Caco-2 (cell line): ENCODE measurements at regions of chr10 and their contacts with region 1.

Region 1: DNA sequence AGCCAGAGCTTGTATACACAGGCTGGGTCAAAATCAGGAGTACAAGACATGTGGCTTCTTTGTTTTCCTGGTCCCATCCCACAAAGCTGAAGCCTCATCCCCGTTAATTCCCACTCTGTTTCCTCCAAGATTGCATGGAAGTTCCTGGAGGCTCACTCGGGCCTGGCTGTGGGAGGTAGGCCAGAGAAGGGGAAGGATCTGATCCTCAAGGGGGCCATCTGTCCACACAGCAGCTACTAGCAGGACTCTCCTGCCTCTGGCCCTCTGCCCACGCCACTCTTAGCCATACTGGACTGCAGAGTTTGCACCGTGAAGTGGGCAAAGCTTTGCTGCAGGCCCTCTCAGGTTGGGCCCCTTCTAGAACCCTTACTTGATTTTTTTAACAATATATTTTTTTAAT is 160.6 kb downstream of the FGFR2 start:
- DNase-seq: peak in 1 of 2 experiments; percentile 43
- H3K4me3 ChIP-seq: no peak overlapping the region
- H3K4me3 Mint-ChIP-seq: peak overlapping the region; percentile 27
- H3K27ac Mint-ChIP-seq: peak overlapping the region; percentile 94
- H3K4me1 ChIP-seq: peaks cover 74% of the 10 kb centered on the region
- H3K4me1 Mint-ChIP-seq: peaks cover 45% of the 10 kb centered on the region
- H3K27me3 ChIP-seq: no peaks in the 10 kb centered on the region
- H3K27me3 Mint-ChIP-seq: no peaks in the 10 kb centered on the region
- CTCF ChIP-seq: no peak

Region 2: DNA sequence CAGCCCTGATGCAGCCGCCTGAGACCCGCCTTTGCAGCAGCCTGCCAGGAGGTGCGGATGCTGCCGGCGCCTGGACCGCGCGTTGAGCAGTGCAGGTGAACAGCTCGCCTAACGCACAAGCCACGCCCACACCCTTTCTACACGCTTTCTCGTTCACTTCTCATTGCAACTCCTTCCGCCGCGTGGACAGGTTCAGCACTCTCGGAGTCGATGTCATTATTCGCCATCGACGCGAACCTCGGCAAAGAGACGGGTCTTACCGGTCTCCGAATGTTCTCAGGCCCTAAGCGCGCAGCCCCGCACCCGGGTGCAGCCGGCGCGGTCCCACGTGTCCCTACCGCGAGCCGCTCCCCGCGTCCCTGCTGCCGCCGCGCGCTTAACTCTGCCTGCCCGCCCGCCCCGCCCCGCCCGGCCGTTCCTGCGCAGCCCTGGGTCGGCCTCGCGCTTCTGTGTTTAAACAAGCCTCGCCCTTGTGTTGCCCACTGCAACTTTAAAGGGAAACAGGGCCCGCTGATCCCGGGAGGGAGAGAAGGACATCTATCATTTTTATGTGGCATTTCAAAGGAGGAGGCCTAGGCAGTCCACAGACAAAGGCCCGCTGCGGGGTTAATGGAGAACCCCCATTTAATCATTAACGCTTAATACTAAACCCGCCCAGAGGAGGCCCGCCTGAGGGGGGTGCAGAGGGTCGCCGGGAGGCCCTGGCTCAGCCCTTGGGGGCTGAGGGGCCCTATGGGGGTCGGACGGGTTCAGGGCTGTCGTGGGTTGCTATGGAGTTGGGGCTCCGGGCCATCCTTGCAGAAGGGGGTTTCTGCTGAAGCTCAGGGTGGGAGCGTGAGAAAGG is 457.9 kb before region 1 on chr10:
- CTCF ChIA-PET with region 1: no interaction called
- POLR2A ChIA-PET with region 1: no interaction called
- intact Hi-C with region 1: loop called (anchors 5 kb)
- DNase-seq: peak; percentile 94 to 97
- H3K4me3 ChIP-seq: peak overlapping the region; percentile 83
- H3K4me3 Mint-ChIP-seq: peak overlapping the region; percentile 82
- H3K27ac Mint-ChIP-seq: peak overlapping the region; percentile 93
- H3K4me1 ChIP-seq: peaks cover 60% of the 10 kb centered on the region
- H3K4me1 Mint-ChIP-seq: peaks cover 57% of the 10 kb centered on the region
- H3K27me3 ChIP-seq: no peaks in the 10 kb centered on the region
- H3K27me3 Mint-ChIP-seq: no peaks in the 10 kb centered on the region
- CTCF ChIP-seq: no peak

Region 3: GRCh38 chr10:121096617-121097461 is 340.8 kb before region 1 on chr10:
- CTCF ChIA-PET with region 1: no interaction called
- POLR2A ChIA-PET with region 1: no interaction called
- intact Hi-C with region 1: loop called (anchors 5 kb)
- DNase-seq: peak; percentile 86 to 87
- H3K4me3 ChIP-seq: no peak overlapping the region
- H3K4me3 Mint-ChIP-seq: peak overlapping the region; percentile 48
- H3K27ac Mint-ChIP-seq: peak overlapping the region; percentile 90
- H3K4me1 ChIP-seq: peaks cover 51% of the 10 kb centered on the region
- H3K4me1 Mint-ChIP-seq: peaks cover 38% of the 10 kb centered on the region
- H3K27me3 ChIP-seq: no peaks in the 10 kb centered on the region
- H3K27me3 Mint-ChIP-seq: no peaks in the 10 kb centered on the region
- CTCF ChIP-seq: no peak

Region 4: DNA sequence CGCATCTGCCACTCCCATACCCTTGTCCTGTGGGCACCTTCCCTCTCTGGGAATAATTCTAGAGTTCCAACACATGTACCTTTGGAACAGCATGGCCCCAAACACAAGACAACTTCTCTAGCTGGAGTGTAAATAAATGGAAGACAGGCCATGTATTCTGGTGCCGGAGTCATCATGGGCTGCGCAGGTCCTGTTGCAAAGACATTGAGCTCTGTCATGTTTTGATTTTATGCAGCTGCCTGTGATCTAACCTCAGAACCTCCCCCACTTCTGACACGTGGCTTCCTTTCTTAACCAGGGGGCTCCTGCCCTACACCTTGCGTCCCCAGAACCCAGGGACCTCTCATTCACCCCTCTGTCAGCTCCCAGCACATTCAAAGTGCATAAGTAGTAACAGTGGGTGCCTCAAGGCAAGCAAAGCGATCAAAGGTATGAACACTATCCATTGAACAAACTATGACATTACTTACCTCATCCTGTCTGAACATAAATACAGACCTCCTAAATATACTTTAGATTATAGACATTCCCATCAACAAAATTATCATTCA is 59.3 kb before region 1 on chr10:
- CTCF ChIA-PET with region 1: no interaction called
- POLR2A ChIA-PET with region 1: no interaction called
- intact Hi-C with region 1: loop called (anchors 1 kb)
- DNase-seq: peak; percentile 62 to 66
- H3K4me3 ChIP-seq: no peak overlapping the region
- H3K4me3 Mint-ChIP-seq: peak overlapping the region; percentile 52
- H3K27ac Mint-ChIP-seq: peak overlapping the region; percentile 88
- H3K4me1 ChIP-seq: peaks cover 70% of the 10 kb centered on the region
- H3K4me1 Mint-ChIP-seq: peaks cover 56% of the 10 kb centered on the region
- H3K27me3 ChIP-seq: no peaks in the 10 kb centered on the region
- H3K27me3 Mint-ChIP-seq: no peaks in the 10 kb centered on the region
- CTCF ChIP-seq: no peak

Region 5: DNA sequence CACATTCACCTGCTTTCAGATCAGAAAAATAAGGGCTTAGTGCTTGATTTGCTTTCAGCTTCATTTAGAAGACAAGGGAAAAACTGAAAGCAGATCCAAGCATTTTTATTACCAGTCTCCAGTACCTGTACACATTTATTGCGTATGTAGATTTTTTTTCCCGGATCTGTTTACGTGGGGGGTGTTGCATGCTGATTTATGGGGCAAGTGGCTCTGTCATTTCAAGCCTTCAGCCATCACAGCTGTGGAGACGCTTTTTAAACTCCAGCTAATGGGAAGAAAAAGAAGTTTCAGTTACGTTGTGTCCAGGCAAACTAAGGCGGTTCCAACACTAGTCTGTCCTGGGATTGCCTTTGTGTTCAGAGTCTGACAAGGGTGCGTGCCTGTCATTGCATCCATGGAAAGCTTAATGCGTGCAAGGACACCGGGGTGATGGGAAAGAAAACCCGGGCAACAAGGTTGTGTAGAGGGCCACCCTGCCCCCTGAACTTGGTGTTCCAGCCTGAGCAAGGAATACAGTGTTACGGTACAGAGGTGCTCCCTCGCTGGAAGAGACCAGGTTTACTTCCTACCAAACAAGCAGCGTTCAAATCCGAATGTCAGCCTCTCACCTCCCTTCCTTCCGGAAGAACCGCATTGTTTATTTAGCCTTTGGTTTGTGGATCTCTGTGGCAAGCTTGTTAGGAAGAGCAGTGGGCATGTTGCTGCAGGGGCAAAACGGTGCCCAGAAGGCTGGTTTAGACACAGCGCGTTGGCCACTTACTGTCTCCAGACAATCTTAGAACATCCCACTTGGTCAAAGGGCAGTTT is 32.4 kb after region 1 on chr10:
- CTCF ChIA-PET with region 1: no interaction called
- POLR2A ChIA-PET with region 1: no interaction called
- intact Hi-C with region 1: loop called (anchors 5 kb)
- DNase-seq: no peak
- H3K4me3 ChIP-seq: no peak overlapping the region
- H3K4me3 Mint-ChIP-seq: no peak overlapping the region
- H3K27ac Mint-ChIP-seq: peak overlapping the region; percentile 59
- H3K4me1 ChIP-seq: peaks cover 18% of the 10 kb centered on the region
- H3K4me1 Mint-ChIP-seq: peaks cover 32% of the 10 kb centered on the region
- H3K27me3 ChIP-seq: no peaks in the 10 kb centered on the region
- H3K27me3 Mint-ChIP-seq: no peaks in the 10 kb centered on the region
- CTCF ChIP-seq: no peak

Region 6: DNA sequence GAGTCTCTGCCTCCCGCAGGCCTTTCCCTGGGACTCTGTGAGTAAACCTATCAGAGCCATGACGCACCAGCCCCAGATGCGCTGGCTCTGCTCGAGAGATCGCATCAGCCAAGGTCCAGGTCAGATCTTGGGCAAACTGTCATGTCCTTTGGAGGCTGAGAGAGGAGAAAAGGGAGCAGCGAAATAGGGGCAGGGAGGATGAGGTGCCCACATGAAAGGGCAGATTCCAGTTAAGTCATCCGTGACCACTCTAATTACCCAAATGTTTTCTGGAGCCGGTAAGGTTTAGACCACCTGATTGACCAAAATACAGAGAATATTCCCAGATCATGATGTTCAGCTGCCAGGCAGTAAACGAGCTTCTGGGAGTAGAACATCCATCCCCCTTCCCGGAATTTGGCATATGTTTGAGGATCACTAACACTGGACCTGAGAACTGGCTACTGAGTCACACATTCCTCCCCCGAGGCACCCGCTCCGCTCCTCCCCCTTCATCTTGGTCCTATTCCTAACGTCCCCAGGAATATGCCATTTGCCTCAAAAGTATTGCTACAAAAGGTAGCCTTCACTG is 72.7 kb after region 1 on chr10:
- CTCF ChIA-PET with region 1: no interaction called
- POLR2A ChIA-PET with region 1: no interaction called
- intact Hi-C with region 1: loop called (anchors 1 kb)
- DNase-seq: no peak
- H3K4me3 ChIP-seq: no peak overlapping the region
- H3K4me3 Mint-ChIP-seq: peak overlapping the region; percentile 24
- H3K27ac Mint-ChIP-seq: peak overlapping the region; percentile 52
- H3K4me1 ChIP-seq: peaks cover 69% of the 10 kb centered on the region
- H3K4me1 Mint-ChIP-seq: peaks cover 51% of the 10 kb centered on the region
- H3K27me3 ChIP-seq: no peaks in the 10 kb centered on the region
- H3K27me3 Mint-ChIP-seq: no peaks in the 10 kb centered on the region
- CTCF ChIP-seq: no peak

Region 7: DNA sequence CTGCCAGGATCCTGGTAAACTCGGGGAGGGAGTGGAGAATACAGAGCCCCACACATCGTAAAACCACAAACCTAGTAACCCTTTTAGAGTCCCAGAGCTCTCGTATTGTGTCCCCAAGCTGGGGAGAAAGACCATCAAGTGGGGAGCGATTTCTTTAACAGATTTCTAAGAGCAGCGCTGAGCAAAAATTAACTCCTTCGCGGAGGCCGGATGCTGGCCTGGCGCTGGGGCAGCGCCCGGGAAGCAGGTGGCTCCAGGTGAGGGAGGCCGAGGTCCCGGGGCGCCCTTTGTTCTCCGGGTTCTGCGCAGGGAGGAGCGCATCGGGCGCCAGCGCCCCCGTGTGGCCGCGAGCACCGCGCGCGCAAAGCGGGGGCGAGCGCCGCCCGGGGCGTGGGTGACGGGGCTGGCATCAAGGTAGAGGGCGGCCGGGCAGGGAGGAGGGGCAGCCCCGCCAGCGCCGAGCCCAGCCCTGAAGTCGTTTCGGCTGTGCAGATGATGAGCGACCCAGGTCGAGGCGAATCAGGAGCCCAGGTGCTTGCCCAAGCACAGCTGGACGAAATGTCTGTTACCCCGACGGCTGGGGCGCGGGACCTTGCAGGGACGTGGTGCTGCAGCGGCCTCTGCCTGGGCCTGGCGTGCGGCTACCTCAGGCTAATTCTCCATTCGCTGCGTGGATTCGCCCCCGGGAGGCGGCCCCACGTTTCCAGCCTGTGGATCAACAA is 171.0 kb after region 1 on chr10:
- CTCF ChIA-PET with region 1: no interaction called
- POLR2A ChIA-PET with region 1: no interaction called
- intact Hi-C with region 1: loop called (anchors 2 kb)
- DNase-seq: peak; percentile 59 to 74
- H3K4me3 ChIP-seq: no peak overlapping the region
- H3K4me3 Mint-ChIP-seq: peak overlapping the region; percentile 55
- H3K27ac Mint-ChIP-seq: peak overlapping the region; percentile 96
- H3K4me1 ChIP-seq: peaks cover 63% of the 10 kb centered on the region
- H3K4me1 Mint-ChIP-seq: peaks cover 57% of the 10 kb centered on the region
- H3K27me3 ChIP-seq: no peaks in the 10 kb centered on the region
- H3K27me3 Mint-ChIP-seq: no peaks in the 10 kb centered on the region
- CTCF ChIP-seq: peak; percentile 46 to 91

Region 8: GRCh38 chr10:121627821-121628581 is 190.4 kb after region 1 on chr10:
- CTCF ChIA-PET with region 1: no interaction called
- POLR2A ChIA-PET with region 1: no interaction called
- intact Hi-C with region 1: no loop called
- DNase-seq: no peak
- H3K4me3 ChIP-seq: no peak overlapping the region
- H3K4me3 Mint-ChIP-seq: no peak overlapping the region
- H3K27ac Mint-ChIP-seq: no peak overlapping the region
- H3K4me1 ChIP-seq: peaks cover 21% of the 10 kb centered on the region
- H3K4me1 Mint-ChIP-seq: peaks cover 23% of the 10 kb centered on the region
- H3K27me3 ChIP-seq: no peaks in the 10 kb centered on the region
- H3K27me3 Mint-ChIP-seq: no peaks in the 10 kb centered on the region
- CTCF ChIP-seq: no peak